ENCODE measurements at regions of chr14 and their contacts with region 1.

Region 1: GRCh38 chr14:93115069-93115820 is 480 bp downstream of the ITPK1 start:
- DNase-seq: peak in 1 of 2 experiments; percentile 84
- H3K4me3 ChIP-seq: peak overlapping the region; percentile 77 to 100 (median 88)
- H3K27ac ChIP-seq: no peak overlapping the region; the same call in 1 of the 2 replicates
- H3K4me1 ChIP-seq: peaks cover 10 to 17% (median 12%) of the 10 kb centered on the region in 4 experiments
- H3K27me3 ChIP-seq: no peaks in the 10 kb centered on the region
- CTCF ChIP-seq: no peak
- EP300 ChIP-seq: no peak
- POLR2A ChIP-seq: no peak
- RAD21 ChIP-seq: no peak

Region 2: GRCh38 chr14:92951912-92952471 is 163.3 kb before region 1 on chr14:
- CTCF ChIA-PET with region 1: interaction called, 21 read pairs
- POLR2A ChIA-PET with region 1: no interaction called
- DNase-seq: peak; percentile 47 to 96
- H3K4me3 ChIP-seq: no peak overlapping the region
- H3K27ac ChIP-seq: no peak overlapping the region
- H3K4me1 ChIP-seq: peaks cover 0 to 3% (median 0%) of the 10 kb centered on the region in 4 experiments; a peak in 1 of 7 replicates
- H3K27me3 ChIP-seq: no peaks in the 10 kb centered on the region
- CTCF ChIP-seq: peak; percentile 90 to 96 (median 93)
- EP300 ChIP-seq: no peak
- POLR2A ChIP-seq: no peak
- RAD21 ChIP-seq: peak; percentile 93

Region 3: GRCh38 chr14:93023039-93023438 is 92.2 kb before region 1 on chr14:
- CTCF ChIA-PET with region 1: interaction called, 12 read pairs
- POLR2A ChIA-PET with region 1: no interaction called
- DNase-seq: no peak
- H3K4me3 ChIP-seq: no peak overlapping the region
- H3K27ac ChIP-seq: no peak overlapping the region
- H3K4me1 ChIP-seq: peaks cover 4 to 30% (median 20%) of the 10 kb centered on the region in 4 experiments
- H3K27me3 ChIP-seq: no peaks in the 10 kb centered on the region
- CTCF ChIP-seq: peak in 2 of 3 experiments; percentile 20 to 21; a peak in 2 of 4 replicates
- EP300 ChIP-seq: no peak
- POLR2A ChIP-seq: no peak
- RAD21 ChIP-seq: no peak; a peak in 2 of 4 replicates

Region 4: DNA sequence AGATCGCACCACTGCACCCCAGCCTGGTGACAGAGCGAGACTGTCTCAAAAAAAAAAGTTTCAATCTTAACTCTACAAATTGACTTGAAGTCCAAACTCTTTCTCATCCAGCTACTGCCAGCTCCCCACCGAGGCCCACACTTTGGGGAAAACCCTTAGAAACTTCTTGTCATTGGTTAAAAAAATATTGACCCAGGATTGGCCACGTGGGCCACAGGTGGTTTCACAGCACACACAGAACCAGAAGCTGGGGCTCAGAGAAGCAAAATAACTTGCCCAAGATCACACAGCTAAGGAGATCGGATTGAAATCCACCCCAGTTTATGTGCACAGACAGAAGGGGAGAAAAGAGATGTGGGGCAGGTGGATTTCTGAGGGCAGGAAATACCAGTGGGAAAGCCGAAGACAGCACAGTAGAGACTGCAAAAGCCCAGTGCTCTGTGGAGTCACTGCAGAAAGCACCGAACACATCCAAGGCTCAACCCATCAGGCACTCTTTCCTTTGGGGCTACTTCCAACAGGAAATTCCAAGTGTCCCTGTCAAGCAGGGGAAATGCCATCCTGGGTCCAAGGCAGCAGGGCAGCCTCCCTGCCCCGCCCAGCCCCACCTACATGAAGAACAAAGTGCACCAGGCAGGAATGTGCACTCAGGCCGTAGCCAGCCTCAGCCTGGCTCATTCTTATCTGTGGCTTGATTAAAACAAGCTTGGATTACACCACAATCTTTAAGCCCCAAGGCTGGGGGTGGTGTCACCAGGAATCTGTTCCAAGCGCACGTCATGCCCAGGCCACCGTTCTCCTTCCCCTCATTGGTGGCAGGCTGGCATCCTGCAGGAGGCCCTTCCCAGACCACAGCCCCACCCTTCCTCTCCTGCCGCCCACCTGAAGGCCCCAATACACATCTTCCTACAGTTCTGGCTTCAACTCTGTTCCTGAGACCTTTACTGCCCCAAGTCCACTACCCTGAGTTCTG is 72.0 kb before region 1 on chr14:
- CTCF ChIA-PET with region 1: interaction called, 16 read pairs
- POLR2A ChIA-PET with region 1: no interaction called
- DNase-seq: no peak
- H3K4me3 ChIP-seq: no peak overlapping the region
- H3K27ac ChIP-seq: no peak overlapping the region
- H3K4me1 ChIP-seq: peaks cover 21 to 65% (median 47%) of the 10 kb centered on the region in 4 experiments
- H3K27me3 ChIP-seq: no peaks in the 10 kb centered on the region
- CTCF ChIP-seq: no peak
- EP300 ChIP-seq: no peak
- POLR2A ChIP-seq: no peak
- RAD21 ChIP-seq: no peak

Region 5: DNA sequence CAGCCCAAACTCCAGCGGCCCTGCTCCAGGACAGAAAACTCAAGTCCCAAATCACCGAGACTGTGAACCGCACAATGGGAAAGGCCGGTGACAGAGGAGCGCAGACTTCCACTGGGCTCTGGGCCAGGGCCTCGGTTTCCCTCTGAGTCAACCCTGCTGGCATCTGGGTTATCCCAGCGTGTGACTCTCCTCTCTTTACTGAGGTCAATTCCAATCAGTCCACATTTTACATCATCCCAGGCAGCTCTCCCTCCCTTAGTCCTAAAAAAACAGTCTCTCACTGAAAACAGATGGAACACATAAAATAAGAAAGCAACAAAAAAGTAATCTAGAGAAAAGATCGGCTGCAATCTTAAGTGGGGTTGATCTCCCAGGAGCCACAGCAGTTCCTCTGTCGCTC is 36.4 kb before region 1 on chr14:
- CTCF ChIA-PET with region 1: interaction called, 25 read pairs
- POLR2A ChIA-PET with region 1: no interaction called
- DNase-seq: no peak
- H3K4me3 ChIP-seq: no peak overlapping the region
- H3K27ac ChIP-seq: no peak overlapping the region
- H3K4me1 ChIP-seq: peaks cover 0 to 4% (median 0%) of the 10 kb centered on the region in 4 experiments; a peak in 1 of 7 replicates
- H3K27me3 ChIP-seq: no peaks in the 10 kb centered on the region
- CTCF ChIP-seq: no peak
- EP300 ChIP-seq: no peak
- POLR2A ChIP-seq: no peak
- RAD21 ChIP-seq: no peak

Region 6: DNA sequence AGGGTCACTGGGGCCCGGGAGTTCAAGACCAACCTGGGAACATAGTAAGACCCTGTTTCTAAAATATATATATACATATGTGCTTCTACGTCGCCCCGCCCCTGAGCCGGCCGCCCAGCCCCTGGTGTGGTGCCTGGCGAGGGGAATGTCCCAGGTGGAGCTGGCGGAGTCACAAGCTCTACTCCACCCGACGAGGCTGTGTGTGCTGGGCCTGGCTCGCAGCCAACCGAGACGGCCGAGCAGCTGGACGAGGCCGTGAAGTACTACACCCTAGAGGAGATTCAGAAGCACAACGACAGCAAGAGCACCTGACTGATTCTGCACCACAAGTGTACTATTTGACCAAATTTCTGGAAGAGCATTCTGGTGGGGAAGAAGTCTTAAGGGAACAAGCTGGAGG is 22.6 kb after region 1 on chr14:
- CTCF ChIA-PET with region 1: interaction called, 69 read pairs
- POLR2A ChIA-PET with region 1: interaction called, 12 read pairs
- DNase-seq: no peak
- H3K4me3 ChIP-seq: no peak overlapping the region
- H3K27ac ChIP-seq: no peak overlapping the region
- H3K4me1 ChIP-seq: no peaks in the 10 kb centered on the region
- H3K27me3 ChIP-seq: no peaks in the 10 kb centered on the region
- CTCF ChIP-seq: peak in 2 of 3 experiments; percentile 18 to 24; a peak in 2 of 4 replicates
- EP300 ChIP-seq: no peak
- POLR2A ChIP-seq: no peak
- RAD21 ChIP-seq: peak in 1 of 2 experiments; percentile 33; a peak in 2 of 4 replicates

Region 7: DNA sequence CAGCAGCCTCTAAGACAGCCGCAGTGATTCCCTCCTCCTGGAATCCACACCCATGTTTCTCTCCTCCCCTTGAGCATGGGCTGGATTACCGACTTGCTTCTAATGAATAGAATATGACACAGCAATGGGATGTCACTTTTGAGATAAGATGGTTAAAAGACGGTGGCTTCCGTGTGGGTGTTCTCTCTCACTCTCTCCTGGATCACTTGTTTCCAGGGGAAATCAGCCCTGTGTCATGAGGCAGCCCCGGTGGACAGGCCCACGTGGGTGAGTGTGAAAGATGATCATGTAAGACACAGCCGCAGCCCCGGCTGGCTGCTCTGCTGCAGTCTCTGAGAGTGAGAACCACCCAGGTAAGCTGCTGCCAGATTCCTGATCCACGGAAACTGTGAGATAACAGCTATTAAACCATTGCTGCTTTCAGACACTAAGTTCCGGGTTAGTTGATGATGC is 58.7 kb after region 1 on chr14:
- CTCF ChIA-PET with region 1: interaction called, 11 read pairs
- POLR2A ChIA-PET with region 1: no interaction called
- DNase-seq: no peak
- H3K4me3 ChIP-seq: no peak overlapping the region
- H3K27ac ChIP-seq: no peak overlapping the region
- H3K4me1 ChIP-seq: no peaks in the 10 kb centered on the region
- H3K27me3 ChIP-seq: no peaks in the 10 kb centered on the region; a peak in 1 of 7 replicates
- CTCF ChIP-seq: no peak
- EP300 ChIP-seq: no peak
- POLR2A ChIP-seq: no peak
- RAD21 ChIP-seq: no peak

Region 8: GRCh38 chr14:93369713-93370266 is 254.5 kb after region 1 on chr14:
- CTCF ChIA-PET with region 1: no interaction called
- POLR2A ChIA-PET with region 1: no interaction called
- DNase-seq: no peak
- H3K4me3 ChIP-seq: no peak overlapping the region
- H3K27ac ChIP-seq: no peak overlapping the region
- H3K4me1 ChIP-seq: no peaks in the 10 kb centered on the region
- H3K27me3 ChIP-seq: no peaks in the 10 kb centered on the region
- CTCF ChIP-seq: no peak
- EP300 ChIP-seq: no peak
- POLR2A ChIP-seq: no peak
- RAD21 ChIP-seq: no peak

Measured in H1 (cell line).